CD4-positive, alpha-beta T cell (primary cell): ENCODE measurements at regions of chr5 and their contacts with region 1.

Region 1: DNA sequence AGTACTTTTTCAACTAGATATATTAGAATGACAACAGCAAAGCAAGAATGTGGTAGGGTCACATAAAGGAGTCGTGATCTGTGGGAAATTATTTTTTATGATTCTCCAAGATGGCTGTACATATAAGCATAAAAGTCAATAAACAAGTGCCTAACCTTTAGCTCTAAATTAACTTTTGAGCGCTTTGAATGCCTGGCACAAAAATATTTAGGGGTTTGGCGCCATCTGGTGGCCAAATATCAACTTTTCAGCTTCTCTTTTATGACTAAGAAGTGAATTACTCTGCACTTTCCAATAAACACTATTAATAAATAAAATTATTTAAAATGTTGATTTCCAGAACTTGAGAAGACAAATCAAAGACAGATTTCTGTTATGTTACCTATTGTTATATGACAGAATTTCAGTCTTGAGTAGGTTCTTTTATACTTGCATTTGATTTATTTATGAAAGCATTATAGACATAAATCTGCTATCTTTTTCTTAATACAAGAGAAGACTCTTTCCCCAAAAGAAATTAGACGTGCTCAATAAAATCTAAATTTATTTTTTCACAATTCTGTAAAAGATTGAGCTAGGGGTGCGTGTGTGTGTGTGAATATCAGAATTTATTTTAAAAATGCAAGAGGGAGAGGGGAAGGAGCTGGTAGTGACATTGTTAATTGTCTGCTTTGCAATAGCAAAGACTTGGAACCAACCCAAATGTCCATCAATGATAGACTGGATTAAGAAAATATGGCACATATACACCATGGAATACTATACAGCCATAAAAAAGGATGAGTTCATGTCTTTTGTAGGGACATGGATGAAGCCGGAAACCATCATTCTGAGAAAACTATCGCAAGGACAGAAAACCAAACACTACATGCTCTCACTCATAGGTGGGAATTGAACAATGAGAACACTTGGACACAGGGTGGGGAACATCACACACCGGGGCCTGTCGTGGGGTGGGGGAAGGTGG is 36.7 kb upstream of the ARRDC3 start:
- DNase-seq: peak; percentile 46 to 83 (median 65)
- ATAC-seq: peak; percentile 48
- H3K4me3 ChIP-seq: no peak overlapping the region
- H3K4me3 Mint-ChIP-seq: no peak overlapping the region
- H3K27ac ChIP-seq: no peak overlapping the region
- H3K27ac Mint-ChIP-seq: no peak overlapping the region
- H3K4me1 ChIP-seq: no peaks in the 10 kb centered on the region
- H3K4me1 Mint-ChIP-seq: peaks cover 21% of the 10 kb centered on the region
- H3K27me3 ChIP-seq: no peaks in the 10 kb centered on the region
- H3K27me3 Mint-ChIP-seq: no peaks in the 10 kb centered on the region
- CTCF ChIP-seq: peak; percentile 87

Region 2: GRCh38 chr5:90802474-90803317 is 617.2 kb before region 1 on chr5:
- CTCF ChIA-PET with region 1: no interaction called
- POLR2A ChIA-PET with region 1: no interaction called
- intact Hi-C with region 1: loop called (anchors 5 kb)
- DNase-seq: peak in 4 of 14 experiments; percentile 4 to 20 (median 16)
- ATAC-seq: no peak
- H3K4me3 ChIP-seq: no peak overlapping the region
- H3K4me3 Mint-ChIP-seq: no peak overlapping the region
- H3K27ac ChIP-seq: no peak overlapping the region
- H3K27ac Mint-ChIP-seq: no peak overlapping the region
- H3K4me1 ChIP-seq: no peaks in the 10 kb centered on the region
- H3K4me1 Mint-ChIP-seq: no peaks in the 10 kb centered on the region
- H3K27me3 ChIP-seq: no peaks in the 10 kb centered on the region
- H3K27me3 Mint-ChIP-seq: peaks cover 8% of the 10 kb centered on the region
- CTCF ChIP-seq: peak; percentile 55

Region 3: GRCh38 chr5:90866333-90866732 is 553.5 kb before region 1 on chr5:
- CTCF ChIA-PET with region 1: interaction called, 10 read pairs
- POLR2A ChIA-PET with region 1: no interaction called
- intact Hi-C with region 1: loop called (anchors 1 to 2 kb)
- DNase-seq: peak in 3 of 14 experiments; percentile 35 to 46 (median 44)
- ATAC-seq: no peak
- H3K4me3 ChIP-seq: no peak overlapping the region
- H3K4me3 Mint-ChIP-seq: no peak overlapping the region
- H3K27ac ChIP-seq: no peak overlapping the region
- H3K27ac Mint-ChIP-seq: no peak overlapping the region
- H3K4me1 ChIP-seq: no peaks in the 10 kb centered on the region
- H3K4me1 Mint-ChIP-seq: peaks cover 7% of the 10 kb centered on the region
- H3K27me3 ChIP-seq: no peaks in the 10 kb centered on the region
- H3K27me3 Mint-ChIP-seq: peaks cover 12% of the 10 kb centered on the region
- CTCF ChIP-seq: peak; percentile 43

Region 4: GRCh38 chr5:90932052-90932699 is 487.7 kb before region 1 on chr5:
- CTCF ChIA-PET with region 1: interaction called, 7 read pairs
- POLR2A ChIA-PET with region 1: no interaction called
- intact Hi-C with region 1: loop called (anchors 1 to 2 kb)
- DNase-seq: peak in 7 of 14 experiments; percentile 1 to 62 (median 44)
- ATAC-seq: no peak
- H3K4me3 ChIP-seq: no peak overlapping the region
- H3K4me3 Mint-ChIP-seq: no peak overlapping the region
- H3K27ac ChIP-seq: no peak overlapping the region
- H3K27ac Mint-ChIP-seq: no peak overlapping the region
- H3K4me1 ChIP-seq: no peaks in the 10 kb centered on the region
- H3K4me1 Mint-ChIP-seq: no peaks in the 10 kb centered on the region
- H3K27me3 ChIP-seq: peaks cover 0 to 5% of the 10 kb centered on the region in 2 experiments
- H3K27me3 Mint-ChIP-seq: no peaks in the 10 kb centered on the region
- CTCF ChIP-seq: peak; percentile 62

Region 5: GRCh38 chr5:91101600-91102379 is 318.1 kb before region 1 on chr5:
- CTCF ChIA-PET with region 1: interaction called, 3 read pairs
- POLR2A ChIA-PET with region 1: no interaction called
- intact Hi-C with region 1: loop called (anchors 1 to 2 kb)
- DNase-seq: peak; percentile 3 to 76 (median 25)
- ATAC-seq: peak; percentile 84
- H3K4me3 ChIP-seq: no peak overlapping the region
- H3K4me3 Mint-ChIP-seq: no peak overlapping the region
- H3K27ac ChIP-seq: no peak overlapping the region
- H3K27ac Mint-ChIP-seq: no peak overlapping the region
- H3K4me1 ChIP-seq: no peaks in the 10 kb centered on the region
- H3K4me1 Mint-ChIP-seq: no peaks in the 10 kb centered on the region
- H3K27me3 ChIP-seq: no peaks in the 10 kb centered on the region
- H3K27me3 Mint-ChIP-seq: no peaks in the 10 kb centered on the region
- CTCF ChIP-seq: peak; percentile 41

Region 6: GRCh38 chr5:91225848-91226686 is 193.8 kb before region 1 on chr5:
- CTCF ChIA-PET with region 1: no interaction called
- POLR2A ChIA-PET with region 1: no interaction called
- intact Hi-C with region 1: loop called in 1 of 2 experiments (anchors 1 kb)
- DNase-seq: peak; percentile 32 to 79 (median 56)
- ATAC-seq: peak; percentile 71
- H3K4me3 ChIP-seq: no peak overlapping the region
- H3K4me3 Mint-ChIP-seq: no peak overlapping the region
- H3K27ac ChIP-seq: no peak overlapping the region
- H3K27ac Mint-ChIP-seq: no peak overlapping the region
- H3K4me1 ChIP-seq: no peaks in the 10 kb centered on the region
- H3K4me1 Mint-ChIP-seq: no peaks in the 10 kb centered on the region
- H3K27me3 ChIP-seq: no peaks in the 10 kb centered on the region
- H3K27me3 Mint-ChIP-seq: no peaks in the 10 kb centered on the region
- CTCF ChIP-seq: peak; percentile 76

Region 7: DNA sequence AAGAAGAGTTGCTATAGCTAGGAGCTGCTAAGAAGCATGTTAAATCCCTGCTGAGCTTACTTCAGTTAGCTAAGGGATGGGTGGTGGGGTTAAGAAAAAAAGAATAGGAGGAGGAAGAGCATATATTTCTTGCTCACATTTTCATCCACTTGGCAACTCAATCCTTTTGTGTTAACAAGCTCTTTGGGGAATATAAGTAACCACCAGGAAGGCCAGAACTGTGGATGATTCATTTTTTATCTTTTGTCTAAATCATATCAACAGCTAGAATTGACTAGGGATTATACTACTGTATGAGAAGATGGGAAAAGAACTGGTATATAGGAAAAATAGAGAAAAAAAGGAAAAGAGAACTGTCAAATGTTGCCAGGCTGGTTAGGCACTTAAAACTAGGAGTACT is 518.6 kb after region 1 on chr5:
- CTCF ChIA-PET with region 1: no interaction called
- POLR2A ChIA-PET with region 1: no interaction called
- intact Hi-C with region 1: no loop called
- DNase-seq: no peak
- ATAC-seq: no peak
- H3K4me3 ChIP-seq: no peak overlapping the region
- H3K4me3 Mint-ChIP-seq: no peak overlapping the region
- H3K27ac ChIP-seq: no peak overlapping the region
- H3K27ac Mint-ChIP-seq: no peak overlapping the region
- H3K4me1 ChIP-seq: no peaks in the 10 kb centered on the region
- H3K4me1 Mint-ChIP-seq: no peaks in the 10 kb centered on the region
- H3K27me3 ChIP-seq: no peaks in the 10 kb centered on the region
- H3K27me3 Mint-ChIP-seq: no peaks in the 10 kb centered on the region
- CTCF ChIP-seq: no peak